ENCODE measurements at regions of chr11 and their contacts with region 1.

Region 1: GRCh38 chr11:130945896-130946295 is 29.6 kb upstream of the SNX19 start:
- DNase-seq: peak; percentile 91

Region 2: DNA sequence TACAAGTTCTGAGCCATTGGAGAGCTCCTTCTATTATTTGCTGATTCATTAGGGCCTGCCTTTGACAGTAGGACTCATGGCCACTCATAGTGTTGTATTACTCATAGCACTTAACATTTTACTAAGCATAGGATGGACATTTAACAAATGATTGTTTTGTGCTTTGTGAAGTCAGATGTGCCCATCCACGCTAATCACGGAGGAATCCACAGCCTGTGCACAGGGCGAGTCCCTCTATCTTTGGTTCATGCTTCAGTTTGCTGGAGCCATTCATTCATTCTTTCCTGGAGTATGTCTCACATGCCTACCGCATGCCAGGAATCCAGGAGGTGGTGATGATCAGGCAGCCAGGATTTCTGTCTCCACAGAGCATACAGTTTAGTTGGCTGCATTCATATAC is 678.6 kb after region 1 on chr11:
- intact Hi-C with region 1: loop called in 1 of 2 experiments (anchors 5 kb)
- DNase-seq: no peak

Measured in posterior vena cava (tissue), 2 donors.